Testis (tissue), 5 donors: ENCODE measurements at regions of chr3 and their contacts with region 1.

Region 1: DNA sequence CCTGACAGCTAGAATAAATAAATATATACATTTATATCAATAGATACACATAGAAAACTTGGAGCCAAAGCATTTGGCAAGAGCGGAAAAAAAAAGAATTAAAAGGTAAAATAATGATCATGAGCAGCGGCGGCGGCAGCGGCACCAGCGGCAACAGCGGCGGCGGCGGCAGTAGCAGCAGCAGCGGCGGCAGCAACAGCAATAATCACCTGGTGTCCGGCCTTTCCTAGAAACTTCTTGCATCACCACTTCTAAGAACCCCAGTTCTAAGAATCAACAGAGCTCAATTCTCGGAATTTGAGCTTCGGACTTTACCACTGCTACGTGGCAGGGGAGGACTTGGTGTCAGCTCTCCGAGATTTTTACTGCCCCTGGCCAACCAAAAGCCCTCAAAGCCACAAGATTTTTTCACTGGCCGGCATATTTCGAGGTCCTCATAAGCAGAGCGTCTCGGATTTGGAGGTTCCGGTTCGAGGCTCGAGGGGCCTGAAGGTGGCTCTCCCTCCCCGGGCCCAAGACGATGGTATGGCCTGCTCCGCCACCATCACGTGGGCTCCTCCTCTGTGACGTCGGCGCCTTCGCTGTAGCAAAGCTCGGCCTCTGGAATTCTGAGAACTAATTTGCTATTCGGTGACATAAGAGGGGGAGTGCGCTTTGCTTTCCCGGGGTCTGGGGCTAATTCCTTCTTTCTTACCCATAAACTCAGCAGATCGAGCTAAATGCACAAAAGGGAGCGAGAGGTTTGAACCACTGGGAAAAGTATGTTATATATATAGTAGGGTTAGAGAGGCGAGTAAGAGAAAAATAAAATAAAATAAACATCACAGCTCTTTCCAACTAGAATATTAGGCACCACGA is at the start of gene BCL6:
- DNase-seq: peak; percentile 96
- H3K4me3 ChIP-seq: peak within 1 kb of the TSS; percentile 78 to 87
- H3K27ac ChIP-seq: peak within 1 kb of the TSS; percentile 97
- H3K4me1 ChIP-seq: peaks cover 26% of the 10 kb centered on the region
- H3K27me3 ChIP-seq: no peaks in the 10 kb centered on the region
- CTCF ChIP-seq: peak in 1 of 3 experiments; percentile 23
- POLR2A ChIP-seq: peak; percentile 98
- total RNA-seq, gene BCL6: 74.0 to 86.6 TPM

Region 2: DNA sequence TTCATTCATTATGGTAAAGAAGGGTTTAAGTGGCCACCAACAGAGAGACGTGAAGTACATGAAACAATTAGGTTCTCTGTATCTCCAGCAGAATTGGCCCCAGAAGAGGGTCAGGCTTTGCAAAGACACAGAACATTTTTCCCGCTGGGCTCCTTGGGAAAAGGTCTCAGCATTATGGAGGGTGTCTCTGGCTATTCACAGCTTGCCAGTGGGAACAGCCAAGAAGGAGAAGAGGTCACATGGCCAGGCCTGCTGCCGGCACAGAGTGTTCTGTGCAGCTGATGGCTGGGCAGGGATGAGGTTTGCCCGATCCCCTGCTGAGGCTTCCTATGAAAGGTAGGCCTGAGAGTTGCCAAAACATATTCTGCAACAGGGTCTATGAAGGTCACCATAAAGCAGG is 330.7 kb after region 1 on chr3:
- intact Hi-C with region 1: loop called (anchors 10 kb)
- DNase-seq: peak; percentile 80
- H3K4me3 ChIP-seq: no peak overlapping the region
- H3K27ac ChIP-seq: peak overlapping the region; percentile 76 to 86
- H3K4me1 ChIP-seq: peaks cover 21% of the 10 kb centered on the region
- H3K27me3 ChIP-seq: no peaks in the 10 kb centered on the region
- CTCF ChIP-seq: no peak
- POLR2A ChIP-seq: no peak

Region 3: DNA sequence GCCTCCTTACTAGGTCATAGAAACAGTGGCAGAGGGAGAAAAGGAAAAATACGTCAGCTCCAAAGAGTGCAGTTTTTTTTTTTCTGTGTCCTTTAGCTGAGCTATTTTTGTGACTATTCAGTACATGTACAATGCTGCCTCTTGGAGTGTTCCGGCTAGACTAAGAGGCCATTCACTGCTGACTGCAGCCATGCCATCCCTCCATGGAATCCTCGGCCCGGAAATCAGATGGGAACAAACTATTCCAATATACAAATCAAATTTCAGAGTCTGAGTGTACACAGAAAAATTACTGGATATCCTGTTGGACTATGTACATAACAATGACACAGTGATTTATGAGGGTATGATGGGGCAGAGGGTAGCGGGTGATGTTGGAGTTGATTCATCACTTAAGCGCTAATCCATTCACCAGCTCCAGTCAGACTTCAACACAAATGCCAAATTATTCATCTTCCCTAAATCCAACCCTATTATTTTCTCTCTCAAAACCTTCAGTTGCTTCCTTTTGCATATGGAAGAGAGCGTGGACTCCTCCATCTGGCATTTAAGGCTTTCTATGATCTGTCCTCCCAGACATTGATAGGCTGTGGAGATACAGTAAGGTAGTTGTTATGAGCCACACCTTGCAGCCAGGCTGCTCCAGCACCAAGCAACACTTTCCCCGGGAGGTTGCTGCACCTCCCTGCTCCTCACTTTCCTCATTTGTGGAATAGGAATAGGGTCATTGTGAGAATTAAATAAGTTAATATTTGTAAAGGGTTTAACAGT is 517.7 kb after region 1 on chr3:
- intact Hi-C with region 1: loop called (anchors 10 kb)
- DNase-seq: no peak
- H3K4me3 ChIP-seq: no peak overlapping the region
- H3K27ac ChIP-seq: peak overlapping the region in 1 of 2 donors; percentile 93
- H3K4me1 ChIP-seq: peaks cover 22% of the 10 kb centered on the region
- H3K27me3 ChIP-seq: no peaks in the 10 kb centered on the region
- CTCF ChIP-seq: no peak
- POLR2A ChIP-seq: no peak

Region 4: DNA sequence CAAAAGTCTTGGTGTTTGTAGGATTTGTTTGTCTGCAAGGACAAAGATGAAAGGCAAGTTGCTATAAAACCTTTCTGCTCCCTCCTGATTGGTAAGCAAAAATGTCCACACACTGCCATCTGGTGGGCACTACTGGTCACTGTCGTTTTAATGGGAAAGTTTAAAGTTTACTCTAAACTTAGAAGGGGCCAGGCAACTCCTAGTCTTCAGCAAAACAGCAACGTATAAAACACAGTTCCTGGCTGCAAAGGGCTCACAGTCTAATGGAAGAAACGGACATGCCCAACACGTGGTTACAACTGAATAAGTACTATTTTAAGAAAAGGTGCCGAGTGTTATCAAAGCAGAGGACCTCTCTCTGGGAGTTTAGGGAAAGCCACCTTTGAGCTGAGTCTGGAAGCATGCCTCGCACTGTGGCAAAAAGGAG is 1402.7 kb after region 1 on chr3:
- intact Hi-C with region 1: loop called (anchors 10 kb)
- DNase-seq: peak; percentile 85
- H3K4me3 ChIP-seq: no peak overlapping the region
- H3K27ac ChIP-seq: peak overlapping the region; percentile 42 to 71
- H3K4me1 ChIP-seq: peaks cover 6% of the 10 kb centered on the region
- H3K27me3 ChIP-seq: no peaks in the 10 kb centered on the region
- CTCF ChIP-seq: peak; percentile 85 to 96 (median 94)
- POLR2A ChIP-seq: no peak